A549 (cell line): ENCODE measurements at regions of chr4 and their contacts with region 1.

Region 1: GRCh38 chr4:73998040-73999011 is at the start of gene CXCL5:
- DNase-seq: peak; percentile 47 to 92
- ATAC-seq: peak; percentile 97 to 98
- H3K4me3 ChIP-seq: peak within 1 kb of the TSS; percentile 52
- H3K27ac ChIP-seq: peak within 1 kb of the TSS; percentile 93 to 99
- H3K4me1 ChIP-seq: peaks cover 16% of the 10 kb centered on the region
- CTCF ChIP-seq: peak; percentile 40
- EP300 ChIP-seq: peak in 1 of 2 experiments; percentile 25; a peak in 1 of 5 replicates
- POLR2A ChIP-seq: peak; percentile 50
- RAD21 ChIP-seq: peak; percentile 78 to 79
- polyA plus RNA-seq, gene CXCL5: 116 and 195 TPM in 2 replicates

Region 2: GRCh38 chr4:74016068-74016467 is 17.7 kb after region 1 on chr4:
- CTCF ChIA-PET with region 1: interaction called, 11 read pairs
- POLR2A ChIA-PET with region 1: no interaction called
- DNase-seq: peak in 1 of 2 experiments; percentile 63
- ATAC-seq: no peak
- H3K4me3 ChIP-seq: no peak overlapping the region
- H3K27ac ChIP-seq: peak overlapping the region; percentile 19 to 60; a peak in 2 of 6 replicates
- H3K4me1 ChIP-seq: peaks cover 14% of the 10 kb centered on the region; the same call in 2 of the 3 replicates
- CTCF ChIP-seq: no peak
- EP300 ChIP-seq: no peak
- POLR2A ChIP-seq: no peak
- RAD21 ChIP-seq: no peak

Region 3: GRCh38 chr4:74038161-74039064 is 40.1 kb after region 1 on chr4 and contains the start of gene CXCL3:
- CTCF ChIA-PET with region 1: interaction called, 23 read pairs
- POLR2A ChIA-PET with region 1: interaction called, 34 read pairs
- DNase-seq: peak; percentile 46 to 72
- ATAC-seq: peak; percentile 93 to 95
- H3K4me3 ChIP-seq: peak within 1 kb of the TSS; percentile 92
- H3K27ac ChIP-seq: peak within 1 kb of the TSS; percentile 95
- H3K4me1 ChIP-seq: peaks cover 43% of the 10 kb centered on the region
- CTCF ChIP-seq: peak; percentile 50; the same call in 2 of the 3 replicates
- EP300 ChIP-seq: no peak
- POLR2A ChIP-seq: no peak; the same call in 1 of the 2 replicates
- RAD21 ChIP-seq: peak in 1 of 2 experiments; percentile 63; a peak in 3 of 5 replicates
- polyA plus RNA-seq, gene CXCL3: 14.9 and 17.9 TPM in 2 replicates

Region 4: GRCh38 chr4:74056858-74057562 is 58.7 kb after region 1 on chr4:
- CTCF ChIA-PET with region 1: interaction called, 14 read pairs
- POLR2A ChIA-PET with region 1: interaction called, 5 read pairs
- DNase-seq: peak; percentile 26 to 71
- ATAC-seq: peak; percentile 78 to 92
- H3K4me3 ChIP-seq: no peak overlapping the region
- H3K27ac ChIP-seq: peak overlapping the region; percentile 85 to 87
- H3K4me1 ChIP-seq: peaks cover 29% of the 10 kb centered on the region
- CTCF ChIP-seq: no peak
- EP300 ChIP-seq: peak; percentile 74 to 76; a peak in 3 of 5 replicates
- POLR2A ChIP-seq: no peak
- RAD21 ChIP-seq: no peak

Region 5: GRCh38 chr4:74098450-74098994 is 100.2 kb after region 1 on chr4:
- CTCF ChIA-PET with region 1: interaction called, 22 read pairs
- POLR2A ChIA-PET with region 1: interaction called, 28 read pairs
- DNase-seq: no peak
- ATAC-seq: peak in 1 of 2 experiments; percentile 1; a peak in 2 of 6 replicates
- H3K4me3 ChIP-seq: peak overlapping the region; percentile 85
- H3K27ac ChIP-seq: peak overlapping the region; percentile 96 to 99
- H3K4me1 ChIP-seq: peaks cover 49% of the 10 kb centered on the region
- CTCF ChIP-seq: no peak; the same call in 2 of the 3 replicates
- EP300 ChIP-seq: no peak
- POLR2A ChIP-seq: no peak
- RAD21 ChIP-seq: peak in 1 of 2 experiments; percentile 20; a peak in 1 of 5 replicates

Region 6: DNA sequence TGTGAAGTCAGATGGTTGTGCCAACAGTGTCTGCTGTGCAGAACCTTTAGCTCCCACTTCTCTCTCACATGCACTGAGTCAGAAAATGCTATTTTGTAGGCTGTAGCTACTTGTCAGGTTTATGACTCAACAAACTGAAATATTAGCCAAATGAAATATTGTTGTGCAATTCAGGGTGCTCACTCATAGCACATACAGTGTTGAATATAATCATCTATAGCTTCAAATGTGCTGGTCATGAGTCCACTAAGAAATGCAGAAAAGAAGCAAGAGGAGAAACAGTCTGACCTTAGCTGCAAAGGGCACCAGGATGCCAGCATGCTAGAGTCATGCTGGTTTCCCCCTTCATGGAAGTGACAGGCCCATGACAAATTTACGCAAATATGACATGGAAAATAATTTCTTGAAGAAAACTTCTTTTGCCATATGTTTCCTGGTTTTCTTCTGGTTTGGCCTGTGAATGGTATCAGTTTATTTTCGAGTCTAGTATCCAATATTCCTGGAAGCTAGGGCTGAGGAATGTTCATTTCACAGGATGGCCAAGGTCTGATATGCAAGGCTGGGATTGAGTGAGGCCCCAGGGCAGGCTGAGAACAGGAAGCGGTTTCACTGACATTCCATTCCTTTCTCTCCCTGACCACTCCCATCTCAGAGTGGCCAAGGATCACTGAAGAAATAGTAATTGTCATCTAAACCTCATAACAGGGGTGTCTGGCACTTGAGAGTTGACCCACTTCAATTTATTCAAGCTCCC is 111.0 kb after region 1 on chr4:
- CTCF ChIA-PET with region 1: interaction called, 9 read pairs
- POLR2A ChIA-PET with region 1: interaction called, 17 read pairs
- DNase-seq: peak; percentile 64 to 94
- ATAC-seq: peak; percentile 94 to 97
- H3K4me3 ChIP-seq: no peak overlapping the region; the same call in 2 of the 3 replicates
- H3K27ac ChIP-seq: peak overlapping the region; percentile 95 to 99
- H3K4me1 ChIP-seq: peaks cover 70% of the 10 kb centered on the region
- CTCF ChIP-seq: no peak
- EP300 ChIP-seq: peak; percentile 74 to 88; a peak in 4 of 5 replicates
- POLR2A ChIP-seq: no peak
- RAD21 ChIP-seq: peak in 1 of 2 experiments; percentile 26; a peak in 1 of 5 replicates

Region 7: GRCh38 chr4:74444891-74445642 is 446.7 kb after region 1 on chr4 and contains the start of gene AREG:
- CTCF ChIA-PET with region 1: no interaction called
- POLR2A ChIA-PET with region 1: no interaction called
- DNase-seq: peak; percentile 60 to 88
- ATAC-seq: peak; percentile 83 to 89
- H3K4me3 ChIP-seq: peak within 1 kb of the TSS; percentile 86
- H3K27ac ChIP-seq: peak within 1 kb of the TSS; percentile 87 to 93
- H3K4me1 ChIP-seq: peaks cover 13% of the 10 kb centered on the region
- CTCF ChIP-seq: peak; percentile 49; the same call in 2 of the 3 replicates
- EP300 ChIP-seq: no peak
- POLR2A ChIP-seq: peak; percentile 57
- RAD21 ChIP-seq: peak in 1 of 2 experiments; percentile 33; a peak in 3 of 5 replicates
- polyA plus RNA-seq, gene AREG: 109 and 187 TPM in 2 replicates